Activated CD8-positive, alpha-beta T cell treated with anti-CD3 and anti-CD28 coated beads for 36 hours (primary cell): ENCODE measurements at regions of chr6 and their contacts with region 1.

Region 1: GRCh38 chr6:159110013-159110412 is 59.2 kb upstream of the FNDC1 start:
- DNase-seq: peak; percentile 52
- ATAC-seq: no peak
- H3K4me3 Mint-ChIP-seq: no peak overlapping the region
- H3K27ac Mint-ChIP-seq: peak overlapping the region; percentile 40
- H3K4me1 Mint-ChIP-seq: peaks cover 52% of the 10 kb centered on the region
- H3K27me3 Mint-ChIP-seq: no peaks in the 10 kb centered on the region
- CTCF ChIP-seq: peak; percentile 95

Region 2: DNA sequence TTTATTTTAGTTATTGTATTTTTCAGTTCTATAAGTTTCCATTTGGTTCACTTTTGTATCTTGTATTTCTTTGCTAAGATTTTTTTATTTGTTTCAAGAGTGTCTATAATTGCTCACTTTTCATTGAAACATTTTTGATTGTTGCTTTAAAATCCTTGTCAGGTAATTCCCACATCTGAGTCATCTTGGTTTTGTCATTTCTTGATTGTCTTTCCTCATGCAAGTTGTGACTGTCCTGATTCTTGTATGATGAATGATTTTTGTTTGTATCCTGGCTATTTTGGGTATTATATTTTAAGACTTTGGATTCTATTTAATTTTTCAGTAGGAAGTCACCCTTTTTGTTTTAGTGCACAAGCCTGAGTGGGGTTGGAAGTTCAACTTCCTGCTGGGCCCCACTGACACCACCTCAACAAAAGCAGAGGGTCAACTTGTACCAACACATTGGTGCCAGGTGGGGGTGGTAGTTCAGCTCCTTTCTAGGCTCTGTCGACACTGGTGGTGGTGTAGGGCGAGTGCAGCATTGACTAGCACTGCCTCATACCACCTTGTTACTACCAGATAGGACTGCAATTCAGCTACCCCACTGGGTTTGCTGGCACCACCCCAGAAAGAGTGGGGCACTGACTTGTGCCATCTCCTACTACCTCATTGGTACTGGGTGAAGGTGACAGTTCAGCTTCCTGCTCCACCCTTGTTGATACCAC is 118.8 kb before region 1 on chr6:
- CTCF ChIA-PET with region 1: interaction called, 14 read pairs
- POLR2A ChIA-PET with region 1: no interaction called
- intact Hi-C with region 1: no loop called
- DNase-seq: peak; percentile 64
- ATAC-seq: peak; percentile 73
- H3K4me3 Mint-ChIP-seq: no peak overlapping the region
- H3K27ac Mint-ChIP-seq: peak overlapping the region; percentile 8
- H3K4me1 Mint-ChIP-seq: peaks cover 48% of the 10 kb centered on the region
- H3K27me3 Mint-ChIP-seq: no peaks in the 10 kb centered on the region
- CTCF ChIP-seq: no peak

Region 3: DNA sequence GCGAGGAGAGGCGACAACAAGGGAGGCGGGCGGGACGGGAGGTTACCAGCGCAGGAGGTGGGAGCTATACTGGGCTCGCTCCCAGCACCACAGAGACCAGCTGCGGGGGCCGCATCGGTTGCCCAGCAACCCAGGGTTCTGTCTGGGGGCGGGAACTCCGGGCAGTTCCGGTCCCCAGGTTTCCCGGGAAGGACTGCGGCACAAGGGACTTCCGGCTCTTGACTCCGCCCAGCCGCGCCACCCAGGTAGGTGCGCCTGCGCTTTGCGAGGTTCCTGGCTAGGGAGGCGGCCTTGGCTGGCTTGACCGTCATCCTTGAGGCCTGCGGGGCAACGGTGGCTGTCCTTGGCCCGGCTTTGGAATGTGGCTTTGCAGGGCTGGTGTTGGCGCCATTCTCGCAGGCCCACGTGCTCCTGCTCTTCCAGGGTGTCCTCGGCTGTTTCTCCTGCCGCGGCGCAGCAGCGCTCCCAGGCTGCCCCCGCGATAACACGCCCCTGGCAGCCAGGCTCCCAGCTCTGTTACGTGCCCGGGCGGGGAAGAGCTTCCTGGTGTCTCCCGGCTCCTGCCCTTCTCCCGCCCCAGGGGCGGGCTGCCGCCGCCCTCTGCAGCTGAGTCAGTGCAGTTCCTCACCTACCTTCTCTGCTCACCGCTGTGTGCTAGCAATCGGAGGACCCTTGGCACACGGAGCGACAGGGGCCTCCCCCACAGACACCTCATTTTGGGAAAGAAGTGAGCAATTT is 110.2 kb before region 1 on chr6 and contains the start of gene RSPH3:
- CTCF ChIA-PET with region 1: interaction called, 506 read pairs
- POLR2A ChIA-PET with region 1: interaction called, 20 read pairs
- intact Hi-C with region 1: no loop called
- DNase-seq: peak; percentile 96
- ATAC-seq: peak; percentile 89
- H3K4me3 Mint-ChIP-seq: peak within 1 kb of the TSS; percentile 83
- H3K27ac Mint-ChIP-seq: peak within 1 kb of the TSS; percentile 81
- H3K4me1 Mint-ChIP-seq: peaks cover 42% of the 10 kb centered on the region
- H3K27me3 Mint-ChIP-seq: no peaks in the 10 kb centered on the region
- CTCF ChIP-seq: no peak
- total RNA-seq, gene RSPH3: 4.2 TPM

Region 4: DNA sequence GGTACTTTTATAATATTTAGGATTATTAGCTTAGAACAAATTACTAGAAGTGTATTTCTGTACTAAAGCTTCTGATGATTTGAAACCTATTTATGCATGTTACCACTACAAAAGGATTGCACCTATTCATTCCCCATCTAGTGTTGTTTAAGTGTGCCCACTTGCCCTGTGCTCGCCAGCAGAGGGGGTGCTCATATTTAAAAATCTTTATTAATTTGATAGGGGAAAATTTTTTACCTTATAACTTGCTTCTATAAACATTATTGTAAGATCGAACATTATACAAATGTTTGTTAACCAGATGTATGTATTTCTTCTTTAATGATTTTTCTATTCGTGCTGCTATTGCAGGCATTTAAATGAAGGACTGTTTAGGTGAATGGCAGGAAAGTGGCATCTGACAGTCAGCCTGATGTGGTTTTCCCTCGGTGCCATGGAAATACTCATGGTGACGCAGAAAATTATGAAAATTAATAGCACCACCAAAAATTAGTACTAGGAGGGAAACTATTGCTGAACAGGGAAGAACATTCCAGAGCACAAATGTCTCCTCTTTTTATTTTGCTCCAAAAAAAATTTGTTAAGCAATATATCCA is 15.1 kb after region 1 on chr6:
- CTCF ChIA-PET with region 1: interaction called, 15 read pairs
- POLR2A ChIA-PET with region 1: interaction called, 3 read pairs
- intact Hi-C with region 1: no loop called
- DNase-seq: no peak
- ATAC-seq: no peak
- H3K4me3 Mint-ChIP-seq: no peak overlapping the region
- H3K27ac Mint-ChIP-seq: no peak overlapping the region
- H3K4me1 Mint-ChIP-seq: no peaks in the 10 kb centered on the region
- H3K27me3 Mint-ChIP-seq: no peaks in the 10 kb centered on the region
- CTCF ChIP-seq: peak; percentile 30

Region 5: GRCh38 chr6:159513074-159513720 is 403.2 kb after region 1 on chr6:
- CTCF ChIA-PET with region 1: no interaction called
- POLR2A ChIA-PET with region 1: no interaction called
- intact Hi-C with region 1: no loop called
- DNase-seq: no peak
- ATAC-seq: no peak
- H3K4me3 Mint-ChIP-seq: no peak overlapping the region
- H3K27ac Mint-ChIP-seq: no peak overlapping the region
- H3K4me1 Mint-ChIP-seq: no peaks in the 10 kb centered on the region
- H3K27me3 Mint-ChIP-seq: peaks cover 6% of the 10 kb centered on the region
- CTCF ChIP-seq: no peak